CD8-positive, alpha-beta T cell (primary cell): ENCODE measurements at regions of chr6 and their contacts with region 1.

Region 1: DNA sequence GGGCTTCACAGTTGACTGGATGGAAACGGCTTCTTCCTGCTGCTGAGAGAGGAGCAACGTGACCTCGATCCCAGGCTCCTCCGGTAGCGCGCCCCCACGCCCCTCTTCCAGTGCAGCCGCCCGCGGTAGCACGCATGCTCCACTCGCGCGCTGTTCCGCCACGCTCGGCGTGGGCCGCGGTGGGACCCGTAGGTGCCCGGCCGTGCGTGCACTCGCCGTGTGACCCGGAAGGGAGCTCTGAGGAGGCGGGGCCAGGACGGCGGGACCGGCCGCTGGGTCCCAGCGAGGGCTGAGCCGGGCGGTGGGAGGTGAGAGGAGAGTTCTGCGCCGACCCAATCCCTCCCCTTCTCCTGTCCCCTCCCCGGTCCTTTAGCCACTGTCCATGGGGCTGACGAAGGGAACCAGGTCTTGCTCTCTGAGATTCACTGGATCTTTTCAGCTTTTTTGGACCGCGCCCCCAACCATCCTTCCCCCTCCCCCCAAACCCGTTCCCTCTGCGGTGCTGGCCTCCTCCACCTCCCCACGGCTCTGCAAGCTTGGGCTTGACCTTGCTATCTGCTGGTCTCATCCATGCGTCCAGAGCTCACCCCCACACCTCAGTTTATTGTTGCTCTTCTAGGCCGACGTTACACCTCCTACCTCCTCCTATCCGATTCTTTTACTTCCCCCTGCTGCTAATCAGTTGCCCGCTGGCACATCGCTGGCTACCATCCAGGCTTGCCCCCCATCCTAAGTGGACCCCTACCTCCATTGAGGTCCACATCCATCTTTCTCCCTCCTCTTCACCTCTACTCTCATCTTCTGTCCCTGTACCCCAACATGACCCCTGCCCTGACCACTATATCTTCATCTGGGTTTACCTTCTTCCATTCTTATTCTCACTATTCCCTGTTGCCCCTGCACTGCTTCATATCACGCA is at the start of gene CUL9:
- DNase-seq: peak; percentile 48 to 91 (median 80)
- ATAC-seq: peak; percentile 91
- H3K4me3 ChIP-seq: peak within 1 kb of the TSS; percentile 62 to 69
- H3K4me3 Mint-ChIP-seq: peak within 1 kb of the TSS; percentile 93
- H3K27ac ChIP-seq: peak within 1 kb of the TSS; percentile 65
- H3K27ac Mint-ChIP-seq: peak within 1 kb of the TSS; percentile 95
- H3K4me1 ChIP-seq: peaks cover 51% of the 10 kb centered on the region
- H3K4me1 Mint-ChIP-seq: peaks cover 49% of the 10 kb centered on the region
- H3K27me3 ChIP-seq: no peaks in the 10 kb centered on the region
- H3K27me3 Mint-ChIP-seq: no peaks in the 10 kb centered on the region
- CTCF ChIP-seq: no peak
- total RNA-seq, gene CUL9: 72.0 to 77.2 TPM

Region 2: DNA sequence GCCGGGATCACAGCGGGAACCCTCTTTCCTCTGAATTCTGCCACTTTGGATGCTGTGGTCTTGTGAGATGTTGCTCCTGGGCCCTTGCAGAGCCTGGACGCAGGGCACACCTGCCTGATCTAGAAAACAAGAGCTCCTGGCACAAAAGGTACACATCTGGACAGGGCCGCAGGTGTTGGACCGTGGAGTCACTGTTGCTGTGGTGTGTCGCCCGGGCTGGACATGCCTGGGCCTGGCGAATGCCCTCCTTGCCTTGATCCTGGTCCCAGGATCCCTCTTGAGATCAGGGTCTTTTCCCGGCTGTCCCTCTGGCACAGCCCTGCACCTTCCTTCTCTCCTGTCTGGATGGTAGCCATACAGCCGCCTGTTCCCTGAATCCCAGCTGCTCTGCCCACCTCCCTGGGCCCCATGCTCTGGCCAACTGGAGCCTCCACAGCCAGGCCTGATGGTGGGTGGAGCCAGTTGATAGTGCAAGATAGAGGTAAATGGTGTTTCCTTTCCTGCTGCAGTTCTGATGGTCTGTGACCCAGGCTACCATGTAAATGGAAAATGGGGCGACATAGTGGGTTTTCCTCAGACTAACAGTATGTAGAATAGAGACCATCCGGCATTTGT is 1631.0 kb before region 1 on chr6:
- CTCF ChIA-PET with region 1: no interaction called
- POLR2A ChIA-PET with region 1: no interaction called
- intact Hi-C with region 1: loop called in 1 of 2 experiments (anchors 5 kb)
- DNase-seq: no peak
- ATAC-seq: no peak
- H3K4me3 ChIP-seq: no peak overlapping the region
- H3K4me3 Mint-ChIP-seq: no peak overlapping the region
- H3K27ac ChIP-seq: no peak overlapping the region
- H3K27ac Mint-ChIP-seq: no peak overlapping the region
- H3K4me1 ChIP-seq: peaks cover 20% of the 10 kb centered on the region
- H3K4me1 Mint-ChIP-seq: peaks cover 15% of the 10 kb centered on the region
- H3K27me3 ChIP-seq: peaks cover 18 to 20% of the 10 kb centered on the region in 2 experiments
- H3K27me3 Mint-ChIP-seq: peaks cover 30% of the 10 kb centered on the region
- CTCF ChIP-seq: no peak